K562 (cell line): ENCODE measurements at regions of chr1 and their contacts with region 1.

Region 1: DNA sequence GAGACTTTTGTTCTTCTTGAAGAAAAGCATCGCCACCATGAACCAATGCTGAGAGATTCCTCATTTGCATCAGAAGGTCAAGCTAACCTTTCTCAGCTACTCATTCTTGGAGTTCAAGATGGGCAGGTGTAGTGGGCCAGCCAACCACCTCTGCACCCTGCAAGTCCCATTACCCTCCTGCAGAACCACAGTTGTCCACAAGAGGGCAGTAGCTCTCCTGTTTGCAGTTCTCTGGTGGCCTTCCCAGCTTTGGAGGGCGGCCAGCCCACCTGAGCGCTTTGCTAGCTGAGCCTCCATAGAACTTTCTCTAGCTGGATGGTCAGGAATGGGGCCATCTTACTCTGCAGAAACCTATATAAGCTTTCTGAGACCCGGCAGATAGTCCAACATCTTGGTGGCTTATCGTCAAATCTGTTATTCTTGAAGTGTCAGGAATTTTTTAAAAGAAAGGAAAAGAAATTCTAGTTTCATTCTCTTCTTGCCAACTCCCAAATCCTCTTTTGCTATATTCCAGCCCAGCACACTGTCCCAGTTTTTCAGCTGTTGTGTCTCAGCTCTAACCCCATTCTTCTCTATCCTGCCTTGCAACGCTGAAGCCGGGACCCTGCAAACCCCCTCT is 11.0 kb upstream of the LMX1A start:
- DNase-seq: peak; percentile 80 to 90 (median 86)
- ATAC-seq: peak; percentile 90
- H3K4me3 ChIP-seq: no peak overlapping the region
- H3K27ac ChIP-seq: no peak overlapping the region
- H3K4me1 ChIP-seq: no peaks in the 10 kb centered on the region
- H3K27me3 ChIP-seq: peaks cover 0 to 6% of the 10 kb centered on the region in 2 experiments; a peak in 1 of 5 replicates
- CTCF ChIP-seq: peak; percentile 76 to 94 (median 80)
- EP300 ChIP-seq: no peak
- POLR2A ChIP-seq: no peak
- RAD21 ChIP-seq: peak; percentile 29 to 45

Region 2: GRCh38 chr1:165129568-165130164 is 237.8 kb before region 1 on chr1:
- CTCF ChIA-PET with region 1: interaction called, 3 read pairs
- POLR2A ChIA-PET with region 1: no interaction called
- in situ Hi-C with region 1: no loop called
- intact Hi-C with region 1: loop called (anchors 5 kb)
- DNase-seq: peak; percentile 27 to 68 (median 45)
- ATAC-seq: peak; percentile 94
- H3K4me3 ChIP-seq: no peak overlapping the region
- H3K27ac ChIP-seq: no peak overlapping the region
- H3K4me1 ChIP-seq: no peaks in the 10 kb centered on the region
- H3K27me3 ChIP-seq: no peaks in the 10 kb centered on the region
- CTCF ChIP-seq: peak; percentile 64 to 79 (median 68)
- EP300 ChIP-seq: no peak
- POLR2A ChIP-seq: no peak
- RAD21 ChIP-seq: peak; percentile 46 to 58

Region 3: GRCh38 chr1:165257969-165258459 is 109.5 kb before region 1 on chr1:
- CTCF ChIA-PET with region 1: no interaction called
- POLR2A ChIA-PET with region 1: no interaction called
- in situ Hi-C with region 1: no loop called
- intact Hi-C with region 1: loop called (anchors 1 kb)
- DNase-seq: peak; percentile 74 to 79 (median 77)
- ATAC-seq: peak; percentile 95
- H3K4me3 ChIP-seq: no peak overlapping the region
- H3K27ac ChIP-seq: no peak overlapping the region
- H3K4me1 ChIP-seq: no peaks in the 10 kb centered on the region
- H3K27me3 ChIP-seq: no peaks in the 10 kb centered on the region; a peak in 1 of 5 replicates
- CTCF ChIP-seq: peak; percentile 67 to 81 (median 80)
- EP300 ChIP-seq: no peak
- POLR2A ChIP-seq: no peak
- RAD21 ChIP-seq: peak; percentile 34 to 63